ENCODE measurements at regions of chr1 and their contacts with region 1.

Region 1: DNA sequence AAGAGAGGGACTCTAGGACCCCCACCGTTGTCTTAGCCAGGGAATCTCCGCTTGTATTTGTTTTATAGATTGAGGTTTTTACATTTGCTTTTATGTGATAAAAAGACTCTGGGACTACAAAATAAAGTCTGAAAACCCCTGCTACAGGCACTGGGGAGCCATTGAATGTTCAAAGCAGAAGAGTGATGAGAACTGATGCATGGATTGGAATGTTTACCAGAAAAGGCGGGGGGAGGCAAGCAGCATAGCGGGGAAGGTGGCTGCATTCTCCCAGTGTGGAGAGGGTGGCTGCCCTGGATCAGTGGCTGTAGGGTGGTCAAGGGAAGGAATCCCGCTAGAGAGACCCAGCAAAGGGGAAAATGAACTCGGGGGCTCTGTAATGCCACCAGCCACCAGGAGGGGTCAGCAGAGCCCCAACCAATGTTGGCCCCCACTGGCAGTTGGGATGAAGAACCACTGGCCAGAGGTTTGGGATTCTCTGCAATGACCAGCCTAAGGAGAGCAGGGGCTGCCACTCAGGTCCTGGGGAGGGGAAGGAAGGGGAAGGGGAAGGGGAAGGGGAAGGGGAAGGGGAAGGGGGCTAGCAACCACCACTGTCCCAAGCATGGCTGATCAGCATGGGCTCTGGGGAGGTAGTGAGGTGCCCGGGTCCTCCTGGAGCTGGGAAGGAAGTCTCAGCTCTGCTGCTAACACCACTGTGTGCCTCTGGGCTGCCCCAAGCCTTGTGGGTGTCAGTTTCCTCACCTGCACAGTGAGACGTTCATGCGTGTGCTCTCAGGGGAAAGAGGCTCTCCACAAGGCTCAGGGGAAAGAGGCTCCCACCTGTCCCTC is 19.2 kb upstream of the PEF1 start:
- DNase-seq: peak; percentile 26
- H3K4me3 Mint-ChIP-seq: no peak overlapping the region
- H3K27ac Mint-ChIP-seq: no peak overlapping the region
- H3K4me1 Mint-ChIP-seq: no peaks in the 10 kb centered on the region
- H3K27me3 Mint-ChIP-seq: peaks cover 1% of the 10 kb centered on the region

Region 2: GRCh38 chr1:31705080-31705866 is 41.4 kb after region 1 on chr1:
- intact Hi-C with region 1: loop called (anchors 2 kb)
- DNase-seq: peak; percentile 49
- H3K4me3 Mint-ChIP-seq: no peak overlapping the region
- H3K27ac Mint-ChIP-seq: no peak overlapping the region
- H3K4me1 Mint-ChIP-seq: peaks cover 29% of the 10 kb centered on the region
- H3K27me3 Mint-ChIP-seq: peaks cover 20% of the 10 kb centered on the region

Region 3: GRCh38 chr1:31745096-31745945 is 81.5 kb after region 1 on chr1:
- intact Hi-C with region 1: loop called (anchors 2 kb)
- DNase-seq: peak; percentile 51
- H3K4me3 Mint-ChIP-seq: no peak overlapping the region
- H3K27ac Mint-ChIP-seq: no peak overlapping the region
- H3K4me1 Mint-ChIP-seq: peaks cover 9% of the 10 kb centered on the region
- H3K27me3 Mint-ChIP-seq: no peaks in the 10 kb centered on the region

Region 4: DNA sequence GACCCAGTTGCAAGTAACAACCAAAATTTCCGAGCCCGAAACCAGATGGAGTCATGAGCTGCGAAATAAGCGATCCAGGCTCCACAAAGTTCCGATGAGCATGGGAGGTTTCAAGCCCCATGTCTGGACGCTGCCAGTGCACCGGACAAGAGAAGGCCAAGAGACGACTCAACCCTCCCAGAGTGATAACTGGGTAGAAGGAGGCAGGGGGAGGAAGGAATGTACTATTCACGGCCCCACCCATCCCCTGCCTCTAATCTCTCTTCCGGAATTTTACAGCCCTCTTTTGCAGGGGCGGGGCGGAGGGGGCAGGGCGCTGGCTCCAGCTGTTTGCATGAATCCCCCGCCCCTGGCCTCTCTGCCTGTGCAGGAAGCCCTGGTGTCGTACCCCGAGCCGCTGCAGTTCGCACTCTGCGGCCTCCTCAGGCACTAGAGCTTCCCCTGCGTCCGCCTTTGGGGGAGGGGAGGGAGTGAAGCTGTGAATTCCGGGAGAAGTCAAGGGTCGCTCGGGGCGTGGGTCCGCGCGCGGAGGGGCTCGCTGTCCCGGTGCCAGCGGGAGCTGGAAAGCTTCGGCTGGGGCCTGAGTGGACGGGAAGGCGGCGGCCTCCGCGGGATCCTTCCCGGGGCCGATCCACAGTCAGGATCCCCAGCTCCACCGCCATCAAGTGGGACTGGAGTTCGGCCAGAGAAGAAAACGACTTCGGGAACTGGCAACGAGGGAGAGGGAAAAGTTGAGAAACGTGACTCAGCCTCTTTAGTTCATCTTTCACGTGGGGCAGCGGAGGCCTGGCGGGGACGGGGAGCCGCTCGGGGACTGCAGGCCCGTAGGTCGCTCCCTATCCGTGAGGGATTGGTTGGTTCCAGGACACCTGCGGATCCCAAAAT is 280.6 kb after region 1 on chr1:
- intact Hi-C with region 1: no loop called
- DNase-seq: peak; percentile 87
- H3K4me3 Mint-ChIP-seq: peak overlapping the region; percentile 78
- H3K27ac Mint-ChIP-seq: peak overlapping the region; percentile 94
- H3K4me1 Mint-ChIP-seq: peaks cover 39% of the 10 kb centered on the region
- H3K27me3 Mint-ChIP-seq: no peaks in the 10 kb centered on the region

Measured in activated T-helper 2 cell treated with anti-CD3 and anti-CD28 coated beads, Interferon-gamma antibody, Interleukin-2, Interleukin-4, amounts not matched to agents 10 μg/mL and 5 μg/mL and 100 μg/mL, durations not matched to agents 14 hours and 24 hours and 36 hours (primary cell).